Activated CD4-positive, alpha-beta T cell treated with anti-CD3 and anti-CD28 coated beads for 36 hours (primary cell): ENCODE measurements at regions of chr12 and their contacts with region 1.

Region 1: GRCh38 chr12:50400598-50401364 is at the start of gene LARP4:
- DNase-seq: peak; percentile 95
- ATAC-seq: peak; percentile 97
- H3K4me3 Mint-ChIP-seq: peak within 1 kb of the TSS; percentile 93
- H3K27ac Mint-ChIP-seq: peak within 1 kb of the TSS; percentile 94
- H3K4me1 Mint-ChIP-seq: peaks cover 13% of the 10 kb centered on the region
- H3K27me3 Mint-ChIP-seq: no peaks in the 10 kb centered on the region
- total RNA-seq, gene LARP4: 66.3 to 72.4 TPM

Region 2: DNA sequence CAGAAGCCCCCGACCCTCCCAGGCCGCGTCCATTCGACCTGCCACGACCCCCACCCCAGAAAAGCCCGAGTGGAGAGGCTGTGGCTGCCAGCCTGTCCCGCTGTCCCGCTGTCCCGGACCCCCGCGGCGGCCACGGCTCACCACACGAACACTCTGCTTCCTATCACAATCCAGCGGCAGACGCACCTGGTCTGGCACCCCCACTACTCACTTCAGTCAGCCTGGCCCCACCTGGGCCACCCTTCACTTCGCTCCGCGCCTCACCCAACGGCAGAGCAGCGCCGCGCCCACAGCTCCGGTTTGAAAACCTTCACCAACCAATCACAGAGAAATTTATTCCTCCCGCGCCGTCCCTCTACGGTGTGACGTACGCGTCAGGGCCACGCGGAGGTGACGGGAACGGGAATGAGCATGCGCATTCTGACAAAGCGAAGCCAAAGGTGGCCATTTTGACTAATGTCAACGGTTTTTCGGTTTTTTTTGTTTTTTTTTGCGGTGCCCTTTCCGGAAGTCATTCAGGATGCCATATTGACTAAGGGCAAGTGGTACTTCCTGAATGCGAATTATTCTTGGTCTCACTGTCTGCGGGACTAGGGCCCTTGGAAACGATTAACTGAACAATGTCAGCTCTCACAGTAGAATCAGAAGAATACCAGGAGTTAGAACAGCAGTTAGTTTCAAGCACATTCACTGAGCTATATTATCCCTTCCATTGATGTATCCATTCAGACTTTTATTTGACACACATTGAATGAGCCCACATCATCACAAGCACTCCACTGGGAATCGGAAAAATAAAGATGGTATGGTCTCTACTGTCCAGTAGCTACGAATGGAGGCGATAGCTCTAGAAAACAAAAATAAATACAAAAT is 375.4 kb before region 1 on chr12 and contains the start of gene RACGAP1:
- CTCF ChIA-PET with region 1: no interaction called
- POLR2A ChIA-PET with region 1: no interaction called
- intact Hi-C with region 1: loop called in 1 of 2 experiments (anchors 1 kb)
- DNase-seq: peak; percentile 97
- ATAC-seq: peak; percentile 98
- H3K4me3 Mint-ChIP-seq: peak within 1 kb of the TSS; percentile 90
- H3K27ac Mint-ChIP-seq: peak within 1 kb of the TSS; percentile 95
- H3K4me1 Mint-ChIP-seq: peaks cover 23% of the 10 kb centered on the region
- H3K27me3 Mint-ChIP-seq: no peaks in the 10 kb centered on the region
- total RNA-seq, gene RACGAP1: 99.7 to 118 TPM

Region 3: DNA sequence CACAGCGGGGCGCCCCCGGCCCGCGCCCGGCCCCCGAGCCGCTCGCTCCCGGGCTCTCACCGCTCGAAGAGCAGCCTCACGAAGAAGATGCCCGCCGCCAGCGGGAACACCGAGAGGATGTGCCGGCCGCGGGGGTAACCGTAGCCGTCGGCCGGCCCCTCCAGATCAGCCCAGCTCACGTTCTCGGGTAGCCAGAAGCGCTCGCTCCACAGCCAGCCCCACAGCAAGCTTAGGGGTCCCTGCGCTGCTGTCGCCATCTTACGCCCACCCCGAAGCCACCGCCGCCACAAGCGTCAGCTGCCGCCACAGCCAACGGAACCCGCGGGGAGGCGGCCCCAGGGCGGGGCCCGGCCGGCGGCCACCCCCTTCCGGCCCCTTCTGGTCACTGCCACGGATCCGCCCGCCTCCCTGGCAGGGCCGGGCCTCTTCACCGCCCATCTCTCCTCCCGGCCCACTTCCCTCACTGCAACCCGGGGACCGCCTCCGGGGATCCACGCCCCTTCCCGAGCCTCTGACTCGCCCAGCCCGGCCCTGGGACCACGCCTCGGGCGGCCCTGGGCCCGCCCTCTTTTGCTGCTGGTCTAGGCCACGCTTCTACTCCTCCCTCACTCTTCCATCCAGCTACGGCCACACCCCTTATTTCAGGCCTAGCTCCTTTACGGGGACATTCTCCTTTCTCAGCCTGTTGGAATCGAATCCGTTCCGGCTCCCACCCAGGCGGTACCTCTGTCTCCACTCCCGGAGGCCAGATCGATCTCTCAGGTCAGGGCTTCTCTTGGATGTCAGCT is 233.5 kb before region 1 on chr12 and contains the start of gene CERS5:
- CTCF ChIA-PET with region 1: interaction called, 3 read pairs
- POLR2A ChIA-PET with region 1: interaction called, 3 read pairs
- intact Hi-C with region 1: loop called in 1 of 2 experiments (anchors 1 kb)
- DNase-seq: peak; percentile 99
- ATAC-seq: peak; percentile 99
- H3K4me3 Mint-ChIP-seq: peak within 1 kb of the TSS; percentile 85
- H3K27ac Mint-ChIP-seq: peak within 1 kb of the TSS; percentile 96
- H3K4me1 Mint-ChIP-seq: peaks cover 27% of the 10 kb centered on the region
- H3K27me3 Mint-ChIP-seq: no peaks in the 10 kb centered on the region
- total RNA-seq, gene CERS5: 49.4 to 64.4 TPM

Region 4: GRCh38 chr12:50283229-50283923 is 117.4 kb before region 1 on chr12 and contains the start of gene LIMA1:
- CTCF ChIA-PET with region 1: no interaction called
- POLR2A ChIA-PET with region 1: no interaction called
- intact Hi-C with region 1: loop called (anchors 1 to 2 kb)
- DNase-seq: peak; percentile 96
- ATAC-seq: peak; percentile 98
- H3K4me3 Mint-ChIP-seq: peak within 1 kb of the TSS; percentile 91
- H3K27ac Mint-ChIP-seq: peak within 1 kb of the TSS; percentile 88
- H3K4me1 Mint-ChIP-seq: peaks cover 20% of the 10 kb centered on the region
- H3K27me3 Mint-ChIP-seq: no peaks in the 10 kb centered on the region
- total RNA-seq, gene LIMA1: 69.7 to 90.4 TPM

Region 5: DNA sequence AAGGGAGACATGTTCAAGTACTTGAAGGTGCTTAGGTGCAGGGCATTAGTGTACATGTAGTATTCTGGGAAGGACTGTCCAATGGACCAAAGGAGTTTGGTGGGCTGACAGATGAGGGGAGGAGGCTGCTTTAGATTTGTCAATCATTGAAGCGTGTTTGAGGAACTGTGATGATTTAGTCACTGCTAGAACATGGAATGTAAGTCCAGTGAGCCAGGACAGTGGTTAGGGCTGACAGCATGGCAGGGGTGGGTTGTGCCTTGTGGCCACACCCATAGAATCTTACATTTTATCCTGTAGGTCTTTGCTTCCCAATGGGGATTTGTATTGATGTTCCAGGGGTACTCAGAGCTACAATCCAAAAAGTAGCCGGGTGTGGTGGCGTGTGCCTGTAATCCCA is 128.6 kb after region 1 on chr12:
- CTCF ChIA-PET with region 1: no interaction called
- POLR2A ChIA-PET with region 1: no interaction called
- intact Hi-C with region 1: no loop called
- DNase-seq: no peak
- ATAC-seq: no peak
- H3K4me3 Mint-ChIP-seq: no peak overlapping the region
- H3K27ac Mint-ChIP-seq: peak overlapping the region; percentile 59
- H3K4me1 Mint-ChIP-seq: peaks cover 30% of the 10 kb centered on the region
- H3K27me3 Mint-ChIP-seq: no peaks in the 10 kb centered on the region

Region 6: DNA sequence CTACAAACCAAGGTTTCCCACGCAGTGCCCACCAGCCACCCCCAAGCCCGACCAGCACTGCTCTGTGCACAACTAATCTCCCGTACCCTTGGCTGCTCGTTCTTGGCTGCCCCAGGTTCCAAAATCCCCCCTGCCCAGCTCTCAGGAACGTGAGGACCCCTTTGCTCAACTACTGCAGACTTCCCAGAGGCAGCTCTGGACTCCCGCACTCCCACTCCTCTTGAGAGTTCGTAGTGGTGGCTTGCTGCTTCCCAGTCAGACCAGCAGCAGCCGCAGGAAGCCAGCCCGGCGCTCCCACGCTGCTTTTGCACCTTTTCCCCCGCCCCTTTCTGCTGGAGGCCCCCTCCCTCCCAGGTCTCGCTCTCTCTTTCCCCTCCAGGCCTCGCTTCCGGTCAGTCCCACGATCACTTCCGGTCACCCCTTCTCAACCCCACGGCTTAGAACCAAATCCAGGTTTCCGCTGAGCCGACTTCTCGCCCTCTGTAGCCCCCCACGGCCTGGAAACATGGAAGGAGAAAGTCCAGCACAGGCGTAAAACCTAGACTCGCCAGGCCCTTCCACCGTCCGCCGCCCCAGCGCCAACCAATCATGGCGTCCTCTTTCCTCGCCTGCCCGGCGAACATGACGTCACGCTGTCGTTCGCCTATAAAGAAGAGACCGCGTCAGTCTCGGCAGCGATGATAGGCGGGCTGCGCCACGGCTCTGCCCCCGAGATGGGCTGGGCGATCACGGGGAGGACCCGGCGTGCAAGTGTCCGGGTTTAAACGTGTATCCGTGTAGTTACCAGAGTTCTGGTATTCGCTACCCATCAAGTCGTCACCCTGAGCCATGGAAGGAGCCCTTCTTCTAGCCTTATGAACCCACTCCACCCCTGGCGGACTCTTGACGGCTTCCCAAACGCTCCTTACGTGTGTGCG is 772.0 kb after region 1 on chr12 and contains the start of gene TFCP2:
- CTCF ChIA-PET with region 1: no interaction called
- POLR2A ChIA-PET with region 1: no interaction called
- intact Hi-C with region 1: loop called in 1 of 2 experiments (anchors 5 kb)
- DNase-seq: peak; percentile 97
- ATAC-seq: peak; percentile 99
- H3K4me3 Mint-ChIP-seq: no peak within 1 kb of the TSS
- H3K27ac Mint-ChIP-seq: peak within 1 kb of the TSS; percentile 78
- H3K4me1 Mint-ChIP-seq: peaks cover 10% of the 10 kb centered on the region
- H3K27me3 Mint-ChIP-seq: no peaks in the 10 kb centered on the region
- total RNA-seq, gene TFCP2: 39.5 to 47.3 TPM